GM12878 (cell line): ENCODE measurements at regions of chr5 and their contacts with region 1.

Region 1: GRCh38 chr5:141412854-141413539 is at the start of gene PCDHGA10:
- DNase-seq: peak; percentile 27
- ATAC-seq: peak; percentile 89
- H3K4me3 ChIP-seq: peak within 1 kb of the TSS; percentile 76
- H3K27ac ChIP-seq: no peak within 1 kb of the TSS
- H3K4me1 ChIP-seq: no peaks in the 10 kb centered on the region; the same call in 1 of the 2 replicates
- H3K27me3 ChIP-seq: peaks cover 0 to 1% of the 10 kb centered on the region in 2 experiments; a peak in 1 of 4 replicates
- CTCF ChIP-seq: peak; percentile 81 to 86 (median 83)
- EP300 ChIP-seq: no peak
- POLR2A ChIP-seq: no peak
- RAD21 ChIP-seq: peak; percentile 86
- polyA plus RNA-seq, gene PCDHGA10: 0.58 to 0.68 TPM

Region 2: GRCh38 chr5:140977003-140977402 is 436.0 kb before region 1 on chr5:
- CTCF ChIA-PET with region 1: no interaction called
- POLR2A ChIA-PET with region 1: no interaction called
- RAD21 ChIA-PET with region 1: no interaction called
- SMC1A ChIA-PET with region 1: no interaction called
- in situ Hi-C with region 1: no loop called
- intact Hi-C with region 1: no loop called
- DNase-seq: no peak
- ATAC-seq: no peak
- H3K4me3 ChIP-seq: no peak overlapping the region
- H3K27ac ChIP-seq: no peak overlapping the region
- H3K4me1 ChIP-seq: no peaks in the 10 kb centered on the region
- H3K27me3 ChIP-seq: no peaks in the 10 kb centered on the region
- CTCF ChIP-seq: no peak
- EP300 ChIP-seq: no peak
- POLR2A ChIP-seq: no peak
- RAD21 ChIP-seq: no peak

Region 3: DNA sequence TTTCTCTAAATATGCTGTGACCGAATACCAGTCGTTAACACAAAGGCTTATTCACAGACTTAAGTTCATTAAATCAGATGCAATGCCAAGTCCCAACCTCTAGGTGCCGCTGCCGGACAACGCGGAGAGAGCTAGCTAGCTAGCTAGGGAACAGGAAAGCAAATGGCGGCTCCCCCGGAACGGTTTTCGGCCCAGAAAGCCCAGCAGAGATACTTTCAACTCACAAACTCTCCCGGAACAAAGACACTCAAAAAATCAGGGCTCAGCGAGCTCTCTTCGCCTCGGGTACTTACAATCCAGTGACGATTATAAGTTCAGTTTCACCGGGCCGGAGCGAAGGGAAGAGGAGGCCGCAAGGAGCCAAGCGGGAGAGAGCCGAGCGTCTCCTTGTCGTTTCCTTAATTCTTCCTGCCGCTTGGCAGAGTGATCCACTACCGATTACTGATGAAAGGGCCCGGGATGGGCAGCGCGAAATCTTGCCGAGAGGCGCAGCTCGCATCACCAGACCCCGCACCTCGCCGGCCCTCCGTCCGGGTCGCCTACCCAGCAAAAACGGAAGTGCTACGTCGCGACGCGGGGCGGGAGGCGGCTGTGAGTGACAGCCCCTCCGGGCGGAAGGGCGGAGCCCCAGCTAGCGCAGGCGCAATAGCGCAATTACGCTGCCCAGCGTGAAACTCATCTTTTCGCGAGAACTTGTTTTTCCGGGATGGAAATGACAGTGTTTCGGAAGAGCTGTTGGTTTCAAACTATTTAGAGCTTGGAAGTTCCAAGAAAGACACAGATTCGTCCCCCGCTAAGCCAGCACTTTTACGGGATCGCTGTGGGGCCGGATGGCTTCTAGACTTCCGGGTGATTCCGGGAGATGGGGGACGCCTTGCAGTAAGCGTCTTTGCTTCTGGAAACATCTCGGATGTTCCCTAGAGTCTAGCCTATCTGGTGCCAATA is 92.5 kb before region 1 on chr5 and contains the start of gene TAF7:
- CTCF ChIA-PET with region 1: interaction called, 8 read pairs
- POLR2A ChIA-PET with region 1: no interaction called
- RAD21 ChIA-PET with region 1: interaction called, 4 read pairs
- SMC1A ChIA-PET with region 1: no interaction called
- in situ Hi-C with region 1: no loop called
- intact Hi-C with region 1: loop called (anchors 2 kb)
- DNase-seq: peak; percentile 72
- ATAC-seq: peak; percentile 96
- H3K4me3 ChIP-seq: peak within 1 kb of the TSS; percentile 81
- H3K27ac ChIP-seq: peak within 1 kb of the TSS; percentile 96
- H3K4me1 ChIP-seq: no peaks in the 10 kb centered on the region
- H3K27me3 ChIP-seq: no peaks in the 10 kb centered on the region
- CTCF ChIP-seq: peak; percentile 81 to 93 (median 90)
- EP300 ChIP-seq: no peak
- POLR2A ChIP-seq: peak; percentile 99
- RAD21 ChIP-seq: peak; percentile 70
- polyA plus RNA-seq, gene TAF7: 43.2 to 69.1 TPM

Region 4: GRCh38 chr5:141369994-141370848 is 42.8 kb before region 1 on chr5 and contains the start of gene PCDHGB3:
- CTCF ChIA-PET with region 1: interaction called, 27 read pairs
- POLR2A ChIA-PET with region 1: no interaction called
- RAD21 ChIA-PET with region 1: interaction called, 13 read pairs
- SMC1A ChIA-PET with region 1: interaction called, 8 read pairs
- in situ Hi-C with region 1: no loop called
- intact Hi-C with region 1: no loop called
- DNase-seq: no peak
- ATAC-seq: peak; percentile 96
- H3K4me3 ChIP-seq: 0 out of 2 replicates have a peak within 1 kb of the TSS, but pooled peaks have one; percentile 18
- H3K27ac ChIP-seq: no peak within 1 kb of the TSS
- H3K4me1 ChIP-seq: no peaks in the 10 kb centered on the region
- H3K27me3 ChIP-seq: no peaks in the 10 kb centered on the region; a peak in 1 of 4 replicates
- CTCF ChIP-seq: peak; percentile 38 to 72 (median 43)
- EP300 ChIP-seq: no peak
- POLR2A ChIP-seq: no peak
- RAD21 ChIP-seq: 0 out of 2 replicates have a peak, but pooled peaks have one; percentile 1
- polyA plus RNA-seq, gene PCDHGB3: not detected

Region 5: GRCh38 chr5:141430332-141431113 is 17.5 kb after region 1 on chr5 and contains the start of gene PCDHGA12:
- CTCF ChIA-PET with region 1: interaction called, 23 read pairs
- POLR2A ChIA-PET with region 1: no interaction called
- RAD21 ChIA-PET with region 1: interaction called, 8 read pairs
- SMC1A ChIA-PET with region 1: interaction called, 5 read pairs
- in situ Hi-C with region 1: no loop called
- intact Hi-C with region 1: no loop called
- DNase-seq: peak; percentile 37
- ATAC-seq: peak; percentile 96
- H3K4me3 ChIP-seq: peak within 1 kb of the TSS; percentile 22; the same call in 1 of the 2 replicates
- H3K27ac ChIP-seq: no peak within 1 kb of the TSS
- H3K4me1 ChIP-seq: no peaks in the 10 kb centered on the region; the same call in 1 of the 2 replicates
- H3K27me3 ChIP-seq: no peaks in the 10 kb centered on the region
- CTCF ChIP-seq: peak; percentile 62 to 82 (median 68)
- EP300 ChIP-seq: no peak
- POLR2A ChIP-seq: no peak
- RAD21 ChIP-seq: peak; percentile 56
- polyA plus RNA-seq, gene PCDHGA12: not detected

Region 6: GRCh38 chr5:141547488-141547887 is 134.5 kb after region 1 on chr5:
- CTCF ChIA-PET with region 1: interaction called, 11 read pairs
- POLR2A ChIA-PET with region 1: no interaction called
- RAD21 ChIA-PET with region 1: no interaction called
- SMC1A ChIA-PET with region 1: interaction called, 3 read pairs
- in situ Hi-C with region 1: no loop called
- intact Hi-C with region 1: no loop called
- DNase-seq: no peak
- ATAC-seq: no peak
- H3K4me3 ChIP-seq: no peak overlapping the region
- H3K27ac ChIP-seq: no peak overlapping the region
- H3K4me1 ChIP-seq: no peaks in the 10 kb centered on the region
- H3K27me3 ChIP-seq: no peaks in the 10 kb centered on the region
- CTCF ChIP-seq: no peak
- EP300 ChIP-seq: no peak
- POLR2A ChIP-seq: no peak
- RAD21 ChIP-seq: no peak

Region 7: GRCh38 chr5:141557681-141558136 is 144.7 kb after region 1 on chr5:
- CTCF ChIA-PET with region 1: interaction called, 245 read pairs
- POLR2A ChIA-PET with region 1: interaction called, 8 read pairs
- RAD21 ChIA-PET with region 1: interaction called, 42 read pairs
- SMC1A ChIA-PET with region 1: interaction called, 67 read pairs
- in situ Hi-C with region 1: loop called (anchors 5 kb)
- intact Hi-C with region 1: loop called (anchors 1 kb)
- DNase-seq: peak; percentile 43
- ATAC-seq: peak; percentile 96
- H3K4me3 ChIP-seq: no peak overlapping the region
- H3K27ac ChIP-seq: peak overlapping the region; percentile 22; the same call in 1 of the 2 replicates
- H3K4me1 ChIP-seq: no peaks in the 10 kb centered on the region
- H3K27me3 ChIP-seq: no peaks in the 10 kb centered on the region
- CTCF ChIP-seq: peak; percentile 72 to 82 (median 78)
- EP300 ChIP-seq: no peak
- POLR2A ChIP-seq: 0 out of 2 replicates have a peak, but pooled peaks have one; percentile 32
- RAD21 ChIP-seq: peak; percentile 96